Gastrocnemius medialis (tissue), 4 donors: ENCODE measurements at regions of chr7 and their contacts with region 1.

Region 1: GRCh38 chr7:149879766-149880637 is 6.2 kb downstream of the ATP6V0E2 start:
- DNase-seq: no peak
- ATAC-seq: no peak
- H3K4me3 ChIP-seq: no peak overlapping the region
- H3K27ac ChIP-seq: no peak overlapping the region
- H3K4me1 ChIP-seq: no peaks in the 10 kb centered on the region
- H3K27me3 ChIP-seq: no peaks in the 10 kb centered on the region
- CTCF ChIP-seq: no peak
- POLR2A ChIP-seq: no peak

Region 2: DNA sequence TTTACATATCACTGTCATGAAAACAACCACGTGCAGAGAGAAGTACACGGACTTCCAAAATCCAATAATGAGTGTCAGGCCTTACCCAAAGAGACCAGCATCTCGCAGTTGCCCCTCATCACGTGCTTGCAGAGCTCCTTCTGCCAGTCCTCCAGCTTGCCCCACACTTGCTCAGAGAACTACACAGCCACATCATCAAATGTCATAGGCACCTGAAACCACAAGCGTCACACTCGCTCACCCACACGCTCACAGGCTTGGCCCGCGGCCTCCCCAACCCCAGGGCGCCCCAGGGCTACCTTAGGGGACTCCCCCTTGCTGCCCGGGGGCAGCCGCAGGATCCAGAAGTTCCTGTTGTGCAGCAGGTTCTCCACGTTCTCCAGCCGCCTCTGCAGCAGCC is 259.0 kb before region 1 on chr7:
- in situ Hi-C with region 1: no loop called
- intact Hi-C with region 1: no loop called
- DNase-seq: no peak
- ATAC-seq: no peak
- H3K4me3 ChIP-seq: no peak overlapping the region
- H3K27ac ChIP-seq: no peak overlapping the region
- H3K4me1 ChIP-seq: peaks cover 16 to 23% of the 10 kb centered on the region in 2 donors
- H3K27me3 ChIP-seq: no peaks in the 10 kb centered on the region
- CTCF ChIP-seq: no peak
- POLR2A ChIP-seq: no peak

Region 3: DNA sequence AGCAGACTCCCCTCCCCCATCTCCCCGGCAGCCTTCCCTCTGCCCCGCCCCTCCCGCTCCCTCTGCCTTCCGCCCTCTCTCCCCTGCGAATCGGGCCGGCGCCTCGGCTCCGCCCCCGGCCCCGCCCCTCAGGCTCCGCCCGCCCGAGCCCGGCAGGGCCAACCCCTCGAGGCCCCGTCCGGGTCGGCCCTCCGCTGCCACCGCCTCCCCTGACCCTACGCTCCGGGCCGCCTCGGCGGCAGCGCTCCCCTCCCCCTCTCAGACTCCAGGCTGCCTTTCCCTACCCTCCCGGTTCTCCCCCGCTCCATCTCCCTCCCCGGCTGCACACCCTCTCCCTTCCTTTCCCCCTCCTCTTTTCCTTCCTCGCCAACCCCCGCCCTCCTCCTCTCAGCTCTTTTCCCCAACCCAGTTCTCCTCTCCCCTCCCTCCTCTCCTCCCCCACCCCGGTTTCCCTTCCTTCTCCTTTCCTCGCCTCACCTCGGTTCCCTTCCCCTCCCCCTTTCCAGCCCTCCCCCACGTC is 108.2 kb before region 1 on chr7:
- in situ Hi-C with region 1: no loop called
- intact Hi-C with region 1: loop called (anchors 5 kb)
- DNase-seq: peak; percentile 78 to 83
- ATAC-seq: peak; percentile 90 to 91
- H3K4me3 ChIP-seq: peak overlapping the region; percentile 71 to 83 (median 74)
- H3K27ac ChIP-seq: peak overlapping the region; percentile 50 to 67 (median 58)
- H3K4me1 ChIP-seq: peaks cover 5 to 23% of the 10 kb centered on the region in 2 donors
- H3K27me3 ChIP-seq: peaks cover 8 to 13% (median 9%) of the 10 kb centered on the region in 3 donors
- CTCF ChIP-seq: no peak
- POLR2A ChIP-seq: peak in 1 of 2 donors; percentile 24